ENCODE measurements at regions of chr11 and their contacts with region 1.

Region 1: GRCh38 chr11:129192156-129192555 is at the start of gene ARHGAP32:
- DNase-seq: peak; percentile 61
- ATAC-seq: peak; percentile 94
- H3K4me3 ChIP-seq: peak within 1 kb of the TSS; percentile 22 to 62
- H3K27ac ChIP-seq: peak within 1 kb of the TSS; percentile 93
- H3K4me1 ChIP-seq: peaks cover 47% of the 10 kb centered on the region
- H3K27me3 ChIP-seq: no peaks in the 10 kb centered on the region
- CTCF ChIP-seq: no peak
- total RNA-seq, gene ARHGAP32: 44.6 TPM

Region 2: GRCh38 chr11:129143335-129143734 is 48.8 kb before region 1 on chr11:
- CTCF ChIA-PET with region 1: no interaction called
- POLR2A ChIA-PET with region 1: interaction called, 3 read pairs
- in situ Hi-C with region 1: no loop called
- intact Hi-C with region 1: loop called (anchors 10 kb)
- DNase-seq: peak; percentile 100
- ATAC-seq: peak; percentile 100
- H3K4me3 ChIP-seq: peak overlapping the region; percentile 27 to 28
- H3K27ac ChIP-seq: peak overlapping the region; percentile 100
- H3K4me1 ChIP-seq: peaks cover 80% of the 10 kb centered on the region
- H3K27me3 ChIP-seq: no peaks in the 10 kb centered on the region
- CTCF ChIP-seq: no peak

Region 3: GRCh38 chr11:129167315-129167714 is 24.8 kb before region 1 on chr11:
- CTCF ChIA-PET with region 1: no interaction called
- POLR2A ChIA-PET with region 1: interaction called, 10 read pairs
- in situ Hi-C with region 1: no loop called
- intact Hi-C with region 1: no loop called
- DNase-seq: no peak
- ATAC-seq: no peak
- H3K4me3 ChIP-seq: no peak overlapping the region
- H3K27ac ChIP-seq: no peak overlapping the region
- H3K4me1 ChIP-seq: no peaks in the 10 kb centered on the region
- H3K27me3 ChIP-seq: no peaks in the 10 kb centered on the region
- CTCF ChIP-seq: no peak

Region 4: GRCh38 chr11:129204150-129204838 is 12.1 kb after region 1 on chr11:
- CTCF ChIA-PET with region 1: no interaction called
- POLR2A ChIA-PET with region 1: interaction called, 10 read pairs
- in situ Hi-C with region 1: no loop called
- intact Hi-C with region 1: no loop called
- DNase-seq: no peak
- ATAC-seq: no peak
- H3K4me3 ChIP-seq: no peak overlapping the region
- H3K27ac ChIP-seq: no peak overlapping the region
- H3K4me1 ChIP-seq: peaks cover 23% of the 10 kb centered on the region
- H3K27me3 ChIP-seq: no peaks in the 10 kb centered on the region
- CTCF ChIP-seq: no peak